ENCODE measurements at regions of chr6 and their contacts with region 1.

Region 1: GRCh38 chr6:96897383-96898240 is at the start of gene NDUFAF4:
- DNase-seq: peak; percentile 72
- ATAC-seq: peak; percentile 92
- H3K4me3 ChIP-seq: peak within 1 kb of the TSS; percentile 84
- H3K27ac ChIP-seq: peak within 1 kb of the TSS; percentile 79
- H3K4me1 ChIP-seq: no peaks in the 10 kb centered on the region
- H3K27me3 ChIP-seq: no peaks in the 10 kb centered on the region
- CTCF ChIP-seq: peak; percentile 89 to 96 (median 94)
- EP300 ChIP-seq: no peak
- POLR2A ChIP-seq: peak; percentile 77
- RAD21 ChIP-seq: peak; percentile 84
- polyA plus RNA-seq, gene NDUFAF4: 181 to 187 TPM

Region 2: GRCh38 chr6:95577304-95578105 is 1320.1 kb before region 1 on chr6 and contains the start of gene MANEA:
- CTCF ChIA-PET with region 1: no interaction called
- POLR2A ChIA-PET with region 1: no interaction called
- RAD21 ChIA-PET with region 1: no interaction called
- SMC1A ChIA-PET with region 1: no interaction called
- in situ Hi-C with region 1: no loop called
- intact Hi-C with region 1: loop called (anchors 5 kb)
- DNase-seq: peak; percentile 46
- ATAC-seq: peak; percentile 88
- H3K4me3 ChIP-seq: peak within 1 kb of the TSS; percentile 92
- H3K27ac ChIP-seq: peak within 1 kb of the TSS; percentile 93
- H3K4me1 ChIP-seq: no peaks in the 10 kb centered on the region; the same call in 1 of the 2 replicates
- H3K27me3 ChIP-seq: no peaks in the 10 kb centered on the region
- CTCF ChIP-seq: no peak
- EP300 ChIP-seq: no peak
- POLR2A ChIP-seq: peak; percentile 87
- RAD21 ChIP-seq: no peak
- polyA plus RNA-seq, gene MANEA: 5.8 to 6.4 TPM

Region 3: GRCh38 chr6:96542702-96543101 is 354.9 kb before region 1 on chr6:
- CTCF ChIA-PET with region 1: interaction called, 4 read pairs
- POLR2A ChIA-PET with region 1: no interaction called
- RAD21 ChIA-PET with region 1: interaction called, 3 read pairs
- SMC1A ChIA-PET with region 1: interaction called, 4 read pairs
- in situ Hi-C with region 1: no loop called
- intact Hi-C with region 1: loop called (anchors 5 kb)
- DNase-seq: no peak
- ATAC-seq: peak; percentile 79
- H3K4me3 ChIP-seq: no peak overlapping the region
- H3K27ac ChIP-seq: no peak overlapping the region
- H3K4me1 ChIP-seq: no peaks in the 10 kb centered on the region
- H3K27me3 ChIP-seq: no peaks in the 10 kb centered on the region
- CTCF ChIP-seq: peak; percentile 26 to 45 (median 31); a peak in 4 of 6 replicates
- EP300 ChIP-seq: no peak
- POLR2A ChIP-seq: no peak
- RAD21 ChIP-seq: peak; percentile 61

Region 4: DNA sequence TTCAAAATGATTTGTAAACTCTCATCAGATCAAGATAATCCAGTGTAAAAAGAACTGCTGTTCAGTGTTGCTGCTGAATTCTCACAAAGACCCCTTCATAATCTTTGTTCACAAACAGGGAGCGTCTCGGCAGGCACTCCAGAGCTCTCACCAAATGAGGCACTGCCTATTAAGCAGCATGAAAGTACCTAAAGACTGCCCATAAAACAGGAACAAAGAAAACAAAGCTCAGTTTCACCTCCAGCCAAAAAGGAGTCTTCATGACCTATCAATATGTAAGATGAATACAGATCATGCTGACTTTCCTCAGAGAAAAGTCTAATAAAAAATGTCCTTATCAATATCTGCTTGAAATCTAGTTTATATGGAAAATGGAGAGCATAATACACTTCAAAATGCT is 102.1 kb before region 1 on chr6:
- CTCF ChIA-PET with region 1: interaction called, 7 read pairs
- POLR2A ChIA-PET with region 1: interaction called, 3 read pairs
- RAD21 ChIA-PET with region 1: interaction called, 15 read pairs
- SMC1A ChIA-PET with region 1: interaction called, 6 read pairs
- in situ Hi-C with region 1: no loop called
- intact Hi-C with region 1: loop called (anchors 1 kb)
- DNase-seq: peak; percentile 76
- ATAC-seq: peak; percentile 98
- H3K4me3 ChIP-seq: 0 out of 2 replicates have a peak overlapping the region, but pooled peaks have one; percentile 2
- H3K27ac ChIP-seq: peak overlapping the region; percentile 84
- H3K4me1 ChIP-seq: peaks cover 14% of the 10 kb centered on the region; the same call in 1 of the 2 replicates
- H3K27me3 ChIP-seq: no peaks in the 10 kb centered on the region
- CTCF ChIP-seq: no peak
- EP300 ChIP-seq: peak in 1 of 2 experiments; percentile 72; a peak in 2 of 4 replicates
- POLR2A ChIP-seq: no peak
- RAD21 ChIP-seq: no peak

Region 5: GRCh38 chr6:96923871-96924493 is 26.4 kb after region 1 on chr6:
- CTCF ChIA-PET with region 1: interaction called, 32 read pairs
- POLR2A ChIA-PET with region 1: no interaction called
- RAD21 ChIA-PET with region 1: interaction called, 10 read pairs
- SMC1A ChIA-PET with region 1: interaction called, 32 read pairs
- in situ Hi-C with region 1: no loop called
- intact Hi-C with region 1: loop called (anchors 2 kb)
- DNase-seq: no peak
- ATAC-seq: peak; percentile 80
- H3K4me3 ChIP-seq: peak overlapping the region; percentile 60
- H3K27ac ChIP-seq: peak overlapping the region; percentile 57
- H3K4me1 ChIP-seq: peaks cover 6% of the 10 kb centered on the region
- H3K27me3 ChIP-seq: no peaks in the 10 kb centered on the region; a peak in 1 of 4 replicates
- CTCF ChIP-seq: no peak
- EP300 ChIP-seq: no peak
- POLR2A ChIP-seq: peak; percentile 83
- RAD21 ChIP-seq: no peak

Region 6: DNA sequence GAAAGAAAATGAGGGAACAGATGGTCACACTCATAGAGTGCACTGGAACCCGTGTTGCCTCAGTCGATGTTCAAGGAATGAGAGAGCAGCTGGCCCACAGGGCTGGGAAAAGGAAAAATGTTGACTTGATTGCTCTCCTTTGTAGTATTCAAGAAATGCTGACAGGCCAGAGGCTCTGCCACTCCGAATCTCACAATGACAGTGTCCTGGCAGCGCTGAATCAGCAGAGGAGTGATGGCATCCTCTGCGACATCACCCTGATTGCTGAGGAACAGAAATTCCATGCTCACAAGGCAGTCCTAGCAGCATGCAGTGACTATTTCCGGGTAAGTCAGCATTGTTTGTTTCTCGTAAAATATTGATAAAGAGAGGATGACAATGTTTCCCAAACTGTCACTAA is 78.2 kb after region 1 on chr6:
- CTCF ChIA-PET with region 1: no interaction called
- POLR2A ChIA-PET with region 1: no interaction called
- RAD21 ChIA-PET with region 1: no interaction called
- SMC1A ChIA-PET with region 1: no interaction called
- in situ Hi-C with region 1: no loop called
- intact Hi-C with region 1: no loop called
- DNase-seq: no peak
- ATAC-seq: no peak
- H3K4me3 ChIP-seq: no peak overlapping the region
- H3K27ac ChIP-seq: no peak overlapping the region
- H3K4me1 ChIP-seq: no peaks in the 10 kb centered on the region
- H3K27me3 ChIP-seq: no peaks in the 10 kb centered on the region
- CTCF ChIP-seq: no peak
- EP300 ChIP-seq: no peak
- POLR2A ChIP-seq: no peak
- RAD21 ChIP-seq: no peak

Region 7: GRCh38 chr6:97059473-97059872 is 161.9 kb after region 1 on chr6:
- CTCF ChIA-PET with region 1: interaction called, 82 read pairs
- POLR2A ChIA-PET with region 1: no interaction called
- RAD21 ChIA-PET with region 1: interaction called, 43 read pairs
- SMC1A ChIA-PET with region 1: interaction called, 52 read pairs
- in situ Hi-C with region 1: loop called (anchors 5 kb)
- intact Hi-C with region 1: loop called (anchors 1 kb)
- DNase-seq: peak; percentile 17
- ATAC-seq: peak; percentile 92
- H3K4me3 ChIP-seq: no peak overlapping the region
- H3K27ac ChIP-seq: no peak overlapping the region
- H3K4me1 ChIP-seq: no peaks in the 10 kb centered on the region
- H3K27me3 ChIP-seq: no peaks in the 10 kb centered on the region; a peak in 1 of 4 replicates
- CTCF ChIP-seq: peak; percentile 41 to 63 (median 50); a peak in 5 of 6 replicates
- EP300 ChIP-seq: no peak
- POLR2A ChIP-seq: no peak
- RAD21 ChIP-seq: peak; percentile 80

Measured in GM12878 (cell line).